ENCODE measurements at regions of chr6 and their contacts with region 1.

Region 1: DNA sequence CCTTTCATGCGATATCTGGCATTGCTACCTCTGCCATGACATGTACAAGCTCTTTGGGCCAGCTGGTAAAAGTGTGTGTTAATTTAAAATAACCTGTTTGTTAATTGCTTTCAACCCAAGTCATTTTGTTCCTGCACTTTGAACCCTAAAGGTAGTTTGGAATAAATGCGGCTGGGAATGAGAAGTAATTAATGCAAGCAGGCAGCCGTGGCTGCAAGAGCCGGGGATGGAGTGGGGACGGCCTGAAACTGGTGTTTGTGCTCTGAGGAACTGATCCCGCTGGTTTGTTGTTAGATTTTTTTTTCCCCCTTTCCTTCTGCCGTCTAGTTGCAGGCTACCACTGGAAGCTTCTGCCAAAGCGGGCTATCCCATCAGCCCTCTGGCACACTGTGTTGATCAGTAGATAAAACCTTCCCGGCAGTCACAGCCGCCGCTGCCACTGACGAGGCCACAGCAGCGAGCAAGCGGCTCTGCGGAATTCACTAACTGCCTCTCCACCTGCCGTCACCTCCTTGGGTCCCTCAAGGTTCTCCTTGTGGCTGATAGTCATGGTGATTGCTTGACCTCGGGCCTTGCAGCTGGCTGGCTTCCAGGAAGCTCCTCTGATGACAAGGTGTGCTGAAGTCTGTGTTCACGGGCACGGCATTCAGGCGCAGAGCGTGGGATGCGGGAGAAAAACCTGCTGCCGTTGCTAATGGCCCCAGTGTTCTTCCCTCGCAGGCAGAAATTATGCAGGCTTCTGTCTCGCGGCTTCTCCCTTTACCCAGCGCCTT is 315.9 kb downstream of the TFAP2A start:
- DNase-seq: peak in 1 of 2 experiments; percentile 47
- H3K4me3 ChIP-seq: peak overlapping the region; percentile 24; the same call in 1 of the 2 replicates
- H3K27ac ChIP-seq: no peak overlapping the region
- H3K4me1 ChIP-seq: no peaks in the 10 kb centered on the region; the same call in 1 of the 2 replicates
- H3K27me3 ChIP-seq: no peaks in the 10 kb centered on the region
- CTCF ChIP-seq: no peak

Region 2: DNA sequence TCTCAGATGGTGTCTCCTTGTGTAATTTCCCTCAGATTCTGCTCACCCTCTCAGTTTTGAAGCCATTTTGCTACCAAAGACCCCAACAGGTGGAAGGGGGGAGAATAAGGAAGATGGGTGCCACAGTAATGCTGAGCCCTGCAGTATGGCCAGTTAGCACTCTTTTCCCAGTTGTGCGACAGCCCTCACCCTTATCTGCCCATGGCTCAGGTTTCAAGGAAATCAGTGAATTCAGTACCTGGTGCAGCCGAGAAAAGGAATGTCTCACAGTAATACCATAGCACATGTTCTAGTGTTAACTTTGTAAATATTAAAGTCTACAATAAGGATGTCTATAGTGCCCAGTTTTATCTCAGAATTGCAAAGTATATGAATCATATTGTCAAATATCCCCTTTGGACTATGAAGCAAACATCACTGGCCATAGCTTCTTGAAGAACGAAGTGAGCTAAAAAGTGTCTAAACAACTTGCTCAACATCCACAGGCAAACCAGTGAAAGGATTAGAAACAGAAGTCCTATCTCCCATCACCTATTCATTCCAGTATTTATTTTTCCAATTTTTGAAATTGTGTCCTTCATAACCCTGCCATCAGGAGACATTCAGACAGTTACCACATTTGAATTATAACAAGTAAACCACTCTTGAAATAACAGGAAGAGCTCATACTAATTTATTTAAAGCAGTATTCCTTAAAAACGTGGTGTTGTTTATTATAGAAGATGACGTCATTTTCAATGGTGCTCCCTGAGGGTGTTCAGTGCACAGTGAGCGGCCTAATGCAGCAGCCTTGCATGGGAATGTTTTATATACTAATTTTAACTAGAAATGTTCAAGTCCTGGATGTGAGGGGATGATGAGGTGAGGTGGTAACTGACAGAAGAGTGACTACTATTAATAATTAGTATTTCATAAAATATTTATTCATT is 50.3 kb before region 1 on chr6:
- CTCF ChIA-PET with region 1: no interaction called
- POLR2A ChIA-PET with region 1: no interaction called
- intact Hi-C with region 1: no loop called
- DNase-seq: peak; percentile 15 to 36
- H3K4me3 ChIP-seq: no peak overlapping the region
- H3K27ac ChIP-seq: no peak overlapping the region
- H3K4me1 ChIP-seq: no peaks in the 10 kb centered on the region
- H3K27me3 ChIP-seq: no peaks in the 10 kb centered on the region
- CTCF ChIP-seq: no peak

Region 3: GRCh38 chr6:10082385-10082784 is 16.6 kb before region 1 on chr6:
- CTCF ChIA-PET with region 1: interaction called, 16 read pairs
- POLR2A ChIA-PET with region 1: interaction called, 3 read pairs
- intact Hi-C with region 1: no loop called
- DNase-seq: no peak
- H3K4me3 ChIP-seq: no peak overlapping the region
- H3K27ac ChIP-seq: no peak overlapping the region
- H3K4me1 ChIP-seq: no peaks in the 10 kb centered on the region
- H3K27me3 ChIP-seq: no peaks in the 10 kb centered on the region
- CTCF ChIP-seq: no peak

Region 4: DNA sequence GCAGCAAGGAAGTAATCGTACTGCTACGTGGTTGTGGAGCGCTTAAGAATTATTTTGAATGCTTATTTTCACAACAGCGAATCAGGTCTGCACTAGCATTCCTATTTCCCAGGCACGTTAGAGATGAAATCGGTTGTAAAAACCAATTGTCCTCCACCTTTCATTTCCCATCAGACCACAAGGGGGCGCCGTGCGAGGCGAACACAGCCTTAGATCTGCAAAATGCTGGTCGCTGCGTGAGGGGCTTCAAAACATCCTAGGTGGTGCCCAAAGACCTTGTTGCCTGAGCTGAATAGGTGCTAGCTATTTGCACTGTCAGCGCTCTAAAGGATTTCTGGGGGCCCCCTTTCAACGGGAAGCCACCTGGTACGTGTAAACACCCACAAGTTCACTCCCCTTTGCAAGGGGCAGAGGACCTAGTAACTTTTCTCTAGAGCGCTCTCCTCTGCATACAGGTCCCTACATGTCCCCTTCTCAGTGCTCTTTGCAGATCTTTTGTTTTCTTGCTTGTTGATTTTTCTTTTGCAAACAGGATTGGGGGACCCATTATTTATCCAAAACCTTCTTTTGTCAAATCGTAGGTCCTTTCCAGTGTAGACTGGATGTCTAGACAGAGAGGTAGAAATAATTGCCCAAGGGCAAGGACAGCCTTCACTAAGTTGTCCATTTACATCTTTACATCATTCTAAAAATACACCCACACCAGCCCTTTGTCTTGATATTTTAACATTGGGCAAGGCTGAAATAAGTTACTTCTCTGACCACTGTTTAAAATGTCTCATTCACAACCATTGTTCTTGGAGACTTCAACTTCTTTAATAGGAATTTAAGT is 1073.8 kb after region 1 on chr6:
- CTCF ChIA-PET with region 1: no interaction called
- POLR2A ChIA-PET with region 1: no interaction called
- intact Hi-C with region 1: no loop called
- DNase-seq: peak in 1 of 2 experiments; percentile 18
- H3K4me3 ChIP-seq: no peak overlapping the region
- H3K27ac ChIP-seq: no peak overlapping the region
- H3K4me1 ChIP-seq: no peaks in the 10 kb centered on the region
- H3K27me3 ChIP-seq: no peaks in the 10 kb centered on the region
- CTCF ChIP-seq: peak; percentile 69